CD4-positive, alpha-beta T cell (primary cell): ENCODE measurements at regions of chr17 and their contacts with region 1.

Region 1: GRCh38 chr17:28812091-28812747 is 30.4 kb downstream of the FAM222B start:
- DNase-seq: peak; percentile 91 to 98 (median 95)
- ATAC-seq: peak; percentile 95
- H3K4me3 ChIP-seq: peak overlapping the region; percentile 78
- H3K4me3 Mint-ChIP-seq: peak overlapping the region; percentile 92
- H3K27ac ChIP-seq: peak overlapping the region; percentile 91 to 93
- H3K27ac Mint-ChIP-seq: peak overlapping the region; percentile 90
- H3K4me1 ChIP-seq: peaks cover 15% of the 10 kb centered on the region
- H3K4me1 Mint-ChIP-seq: peaks cover 49% of the 10 kb centered on the region
- H3K27me3 ChIP-seq: no peaks in the 10 kb centered on the region
- H3K27me3 Mint-ChIP-seq: no peaks in the 10 kb centered on the region
- CTCF ChIP-seq: no peak

Region 2: DNA sequence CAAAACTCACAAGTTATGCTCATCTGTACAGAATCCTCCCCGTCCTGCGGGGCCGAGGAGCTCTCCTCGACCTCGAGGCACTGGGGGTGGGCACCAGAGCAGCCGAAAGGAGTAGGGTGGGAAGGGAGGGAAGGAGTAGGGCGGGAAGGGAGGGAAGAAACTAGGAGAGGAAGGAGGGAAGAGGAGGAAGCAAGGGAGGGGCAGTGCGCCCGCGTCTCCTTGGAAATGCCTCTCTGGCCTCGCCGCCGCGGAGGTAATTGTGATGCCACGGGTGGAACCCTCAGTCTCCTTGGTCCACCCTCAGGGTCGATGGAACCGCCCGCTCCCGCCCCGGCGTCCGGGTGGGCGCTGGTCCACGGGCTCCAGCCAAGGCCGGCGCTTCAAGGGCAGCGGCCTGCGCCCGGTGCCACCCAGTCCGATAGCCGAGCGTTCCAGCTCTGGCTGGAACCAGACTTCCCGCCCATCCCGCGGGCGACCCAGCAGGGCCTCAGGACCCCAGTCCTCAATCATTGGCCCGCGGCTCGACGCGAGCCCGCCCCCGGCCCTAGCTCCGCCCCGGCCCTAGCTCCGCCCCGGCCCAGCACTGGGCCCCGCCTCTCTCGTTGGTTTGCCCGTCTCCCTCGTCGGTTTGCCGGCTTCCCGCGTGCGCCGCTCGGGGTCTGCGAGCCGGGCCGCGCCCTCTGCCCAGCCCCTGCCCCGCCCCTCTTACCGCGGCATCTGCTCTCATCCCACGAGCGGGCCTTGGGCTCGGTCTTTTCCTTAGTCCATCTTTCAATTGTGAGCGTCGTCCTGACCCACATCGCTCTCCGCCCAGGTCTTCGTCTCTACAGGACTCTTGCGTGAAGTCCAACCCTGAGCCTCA is 101.1 kb before region 1 on chr17:
- CTCF ChIA-PET with region 1: no interaction called
- POLR2A ChIA-PET with region 1: no interaction called
- intact Hi-C with region 1: no loop called
- DNase-seq: peak; percentile 78 to 93 (median 86)
- ATAC-seq: peak; percentile 92
- H3K4me3 ChIP-seq: peak overlapping the region; percentile 72
- H3K4me3 Mint-ChIP-seq: peak overlapping the region; percentile 94
- H3K27ac ChIP-seq: peak overlapping the region; percentile 68 to 73
- H3K27ac Mint-ChIP-seq: peak overlapping the region; percentile 87
- H3K4me1 ChIP-seq: peaks cover 18% of the 10 kb centered on the region
- H3K4me1 Mint-ChIP-seq: peaks cover 20% of the 10 kb centered on the region
- H3K27me3 ChIP-seq: peaks cover 4 to 5% of the 10 kb centered on the region in 2 experiments
- H3K27me3 Mint-ChIP-seq: peaks cover 17% of the 10 kb centered on the region
- CTCF ChIP-seq: no peak

Region 3: DNA sequence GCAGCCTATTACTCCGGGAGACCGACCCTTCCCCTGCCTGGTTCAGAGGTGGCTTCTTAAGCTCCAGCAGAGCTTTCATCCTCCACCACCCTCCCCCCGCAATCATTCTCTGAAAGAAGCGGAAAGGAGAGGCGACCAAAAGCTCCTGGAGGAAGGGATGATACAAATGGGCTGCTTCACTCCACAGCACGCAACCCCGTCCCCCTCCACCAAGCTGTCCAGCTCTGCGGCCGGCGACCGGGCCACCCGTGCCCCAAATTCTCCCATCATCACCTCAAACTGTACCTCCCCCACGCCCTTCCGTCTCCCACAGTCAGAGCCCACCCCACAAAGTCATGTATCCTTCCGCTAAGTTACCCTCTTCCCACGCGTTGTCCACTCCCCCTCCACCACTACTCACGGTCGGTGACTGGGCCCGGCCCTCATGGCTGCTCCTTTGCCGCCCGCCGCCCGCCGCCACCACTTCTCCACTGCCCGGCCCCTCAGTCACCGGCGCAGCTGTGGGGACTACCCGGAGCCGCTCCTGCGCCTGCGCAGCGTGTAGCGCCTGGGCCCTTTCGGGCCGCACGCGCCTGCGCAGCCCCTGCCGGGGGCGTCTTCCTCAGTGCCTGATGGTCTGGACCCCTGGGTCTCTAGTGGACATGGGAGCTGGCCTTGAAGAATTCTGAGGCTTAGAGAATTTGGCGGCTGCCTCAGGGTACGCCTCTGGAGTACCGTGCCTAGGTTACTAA is 30.2 kb after region 1 on chr17 and contains the start of gene FAM222B:
- CTCF ChIA-PET with region 1: interaction called, 6 read pairs
- POLR2A ChIA-PET with region 1: interaction called, 14 read pairs
- intact Hi-C with region 1: loop called in 1 of 2 experiments (anchors 1 kb)
- DNase-seq: peak; percentile 70 to 94 (median 83)
- ATAC-seq: peak; percentile 97
- H3K4me3 ChIP-seq: peak within 1 kb of the TSS; percentile 99
- H3K4me3 Mint-ChIP-seq: peak within 1 kb of the TSS; percentile 100
- H3K27ac ChIP-seq: peak within 1 kb of the TSS; percentile 78 to 80
- H3K27ac Mint-ChIP-seq: peak within 1 kb of the TSS; percentile 91
- H3K4me1 ChIP-seq: peaks cover 20% of the 10 kb centered on the region
- H3K4me1 Mint-ChIP-seq: peaks cover 27% of the 10 kb centered on the region
- H3K27me3 ChIP-seq: no peaks in the 10 kb centered on the region
- H3K27me3 Mint-ChIP-seq: no peaks in the 10 kb centered on the region
- CTCF ChIP-seq: no peak
- total RNA-seq, gene FAM222B: 17.3 to 17.5 TPM

Region 4: DNA sequence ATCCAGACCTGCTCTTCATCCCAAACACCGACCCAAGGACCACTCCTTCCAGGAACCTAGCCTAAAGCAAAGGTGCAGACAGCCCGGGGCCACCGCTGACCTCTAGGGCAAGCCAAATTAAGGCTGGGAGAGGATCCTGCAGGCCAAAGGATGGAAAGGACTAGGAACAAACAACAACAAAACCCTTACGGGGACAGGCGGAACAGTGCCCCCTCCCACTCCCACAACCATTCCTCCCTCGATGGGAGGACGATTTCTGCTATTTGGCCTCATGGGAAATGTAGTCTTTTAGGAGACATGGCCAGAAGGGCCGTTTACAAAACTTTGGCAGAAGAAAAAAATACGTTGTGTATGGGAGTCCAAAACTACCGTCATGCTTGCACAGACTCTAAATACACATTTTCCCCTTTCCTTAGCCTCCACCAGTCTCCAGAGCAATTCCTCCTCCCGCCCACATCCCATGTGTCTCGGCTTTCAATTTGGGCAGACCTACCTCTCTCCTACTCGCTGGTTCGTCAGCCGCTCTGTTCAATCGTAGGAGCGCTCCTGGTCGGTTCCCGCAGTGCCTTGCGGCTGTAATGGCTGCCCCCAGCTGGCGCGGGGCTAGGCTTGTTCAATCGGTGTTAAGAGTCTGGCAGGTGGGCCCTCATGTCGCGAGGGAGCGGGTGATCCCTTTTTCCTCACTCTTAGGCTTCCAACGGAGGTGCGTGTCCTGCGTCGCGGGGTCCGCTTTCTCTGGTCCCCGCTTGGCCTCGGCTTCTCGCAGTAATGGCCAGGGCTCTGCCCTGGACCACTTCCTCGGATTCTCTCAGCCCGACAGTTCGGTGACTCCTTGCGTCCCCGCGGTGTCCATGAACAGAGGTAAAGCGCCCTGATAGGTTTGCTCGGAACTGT is 42.5 kb after region 1 on chr17 and contains the start of gene ERAL1:
- CTCF ChIA-PET with region 1: no interaction called
- POLR2A ChIA-PET with region 1: no interaction called
- intact Hi-C with region 1: loop called in 1 of 2 experiments (anchors 5 kb)
- DNase-seq: peak; percentile 69 to 90 (median 76)
- ATAC-seq: peak; percentile 100
- H3K4me3 ChIP-seq: peak within 1 kb of the TSS; percentile 96
- H3K4me3 Mint-ChIP-seq: peak within 1 kb of the TSS; percentile 91
- H3K27ac ChIP-seq: peak within 1 kb of the TSS; percentile 70 to 72
- H3K27ac Mint-ChIP-seq: peak within 1 kb of the TSS; percentile 78
- H3K4me1 ChIP-seq: peaks cover 15% of the 10 kb centered on the region
- H3K4me1 Mint-ChIP-seq: peaks cover 18% of the 10 kb centered on the region
- H3K27me3 ChIP-seq: no peaks in the 10 kb centered on the region
- H3K27me3 Mint-ChIP-seq: no peaks in the 10 kb centered on the region
- CTCF ChIP-seq: no peak
- total RNA-seq, gene ERAL1: 15.6 to 16.8 TPM

Region 5: DNA sequence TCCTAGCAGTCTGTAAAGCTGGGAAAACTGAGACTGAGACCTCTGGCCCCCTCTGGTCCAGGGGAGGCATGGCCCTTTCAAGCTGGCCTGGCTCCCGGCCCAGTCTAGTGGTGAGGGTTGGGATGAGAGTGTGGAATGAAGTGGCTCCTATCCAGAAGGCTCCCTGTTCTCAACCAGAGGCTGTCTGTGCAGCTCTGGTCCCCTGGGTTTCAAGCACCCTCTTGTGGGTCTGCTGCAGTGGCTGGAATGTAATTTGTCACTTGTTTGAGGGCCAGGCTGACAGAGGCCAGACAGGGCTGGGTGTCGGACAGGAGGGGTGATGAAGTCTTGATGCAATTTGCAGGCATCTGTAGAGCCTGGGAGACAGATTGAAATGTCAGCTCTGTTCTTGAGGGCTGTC is 161.2 kb after region 1 on chr17:
- CTCF ChIA-PET with region 1: no interaction called
- POLR2A ChIA-PET with region 1: no interaction called
- intact Hi-C with region 1: no loop called
- DNase-seq: no peak
- ATAC-seq: no peak
- H3K4me3 ChIP-seq: no peak overlapping the region
- H3K4me3 Mint-ChIP-seq: no peak overlapping the region
- H3K27ac ChIP-seq: no peak overlapping the region
- H3K27ac Mint-ChIP-seq: no peak overlapping the region
- H3K4me1 ChIP-seq: no peaks in the 10 kb centered on the region
- H3K4me1 Mint-ChIP-seq: no peaks in the 10 kb centered on the region
- H3K27me3 ChIP-seq: no peaks in the 10 kb centered on the region
- H3K27me3 Mint-ChIP-seq: no peaks in the 10 kb centered on the region
- CTCF ChIP-seq: no peak